MCF 10A (cell line): ENCODE measurements at regions of chr2 and their contacts with region 1.

Region 1: GRCh38 chr2:82780001-82780400 is 1679.1 kb downstream of the SUCLG1 start:
- DNase-seq: no peak
- H3K4me3 Mint-ChIP-seq: no peak overlapping the region
- H3K27ac Mint-ChIP-seq: no peak overlapping the region
- H3K4me1 Mint-ChIP-seq: no peaks in the 10 kb centered on the region
- H3K27me3 Mint-ChIP-seq: no peaks in the 10 kb centered on the region
- CTCF ChIP-seq: no peak

Region 2: DNA sequence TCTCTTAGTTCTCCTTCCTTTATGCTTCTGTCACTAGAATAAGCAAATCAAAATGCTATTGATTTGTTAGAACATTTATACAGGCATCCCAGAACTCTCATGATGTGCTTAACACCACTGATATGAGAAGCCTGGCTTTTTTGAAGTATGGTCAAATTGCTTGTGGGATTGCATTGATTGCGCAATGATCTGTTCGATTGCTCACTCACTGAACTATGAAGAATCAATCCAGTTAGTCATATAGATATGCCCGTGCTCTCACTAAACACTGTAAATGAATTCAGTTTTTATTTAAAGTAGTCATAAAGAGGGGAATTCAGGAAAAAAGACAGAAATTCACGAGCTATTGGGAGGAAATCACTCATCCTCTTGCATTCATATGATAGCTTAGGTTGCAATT is 441.3 kb after region 1 on chr2:
- CTCF ChIA-PET with region 1: interaction called, 11 read pairs
- POLR2A ChIA-PET with region 1: no interaction called
- intact Hi-C with region 1: no loop called
- DNase-seq: peak; percentile 41
- H3K4me3 Mint-ChIP-seq: no peak overlapping the region
- H3K27ac Mint-ChIP-seq: no peak overlapping the region
- H3K4me1 Mint-ChIP-seq: no peaks in the 10 kb centered on the region
- H3K27me3 Mint-ChIP-seq: no peaks in the 10 kb centered on the region
- CTCF ChIP-seq: no peak